Motor neuron (in vitro differentiated cells): ENCODE measurements at regions of chr1 and their contacts with region 1.

Region 1: GRCh38 chr1:155352631-155353030 is 31.9 kb downstream of the RUSC1 start:
- ATAC-seq: no peak
- H3K4me3 ChIP-seq: no peak overlapping the region
- H3K27ac ChIP-seq: no peak overlapping the region
- H3K4me1 ChIP-seq: no peaks in the 10 kb centered on the region

Region 2: GRCh38 chr1:155562581-155563376 is 210.1 kb after region 1 on chr1 and contains the start of gene ASH1L:
- in situ Hi-C with region 1: loop called in 1 of 9 experiments (anchors 25 kb)
- ATAC-seq: peak; percentile 77 to 86 (median 82)
- H3K4me3 ChIP-seq: peak within 1 kb of the TSS; percentile 98 to 100 (median 99)
- H3K27ac ChIP-seq: peak within 1 kb of the TSS; percentile 100
- H3K4me1 ChIP-seq: peaks cover 17 to 21% of the 10 kb centered on the region in 2 donors
- total RNA-seq, gene ASH1L: 25.3 to 66.6 (median 43.0) TPM

Region 3: GRCh38 chr1:155591770-155592169 is 239.1 kb after region 1 on chr1:
- in situ Hi-C with region 1: loop called in 1 of 9 experiments (anchors 25 kb)
- ATAC-seq: peak in 3 of 8 experiments; percentile 57 to 59 (median 59)
- H3K4me3 ChIP-seq: no peak overlapping the region
- H3K27ac ChIP-seq: no peak overlapping the region
- H3K4me1 ChIP-seq: peaks cover 12% of the 10 kb centered on the region in 2 donors